Heart left ventricle (tissue), 16 donors: ENCODE measurements at regions of chr16 and their contacts with region 1.

Region 1: DNA sequence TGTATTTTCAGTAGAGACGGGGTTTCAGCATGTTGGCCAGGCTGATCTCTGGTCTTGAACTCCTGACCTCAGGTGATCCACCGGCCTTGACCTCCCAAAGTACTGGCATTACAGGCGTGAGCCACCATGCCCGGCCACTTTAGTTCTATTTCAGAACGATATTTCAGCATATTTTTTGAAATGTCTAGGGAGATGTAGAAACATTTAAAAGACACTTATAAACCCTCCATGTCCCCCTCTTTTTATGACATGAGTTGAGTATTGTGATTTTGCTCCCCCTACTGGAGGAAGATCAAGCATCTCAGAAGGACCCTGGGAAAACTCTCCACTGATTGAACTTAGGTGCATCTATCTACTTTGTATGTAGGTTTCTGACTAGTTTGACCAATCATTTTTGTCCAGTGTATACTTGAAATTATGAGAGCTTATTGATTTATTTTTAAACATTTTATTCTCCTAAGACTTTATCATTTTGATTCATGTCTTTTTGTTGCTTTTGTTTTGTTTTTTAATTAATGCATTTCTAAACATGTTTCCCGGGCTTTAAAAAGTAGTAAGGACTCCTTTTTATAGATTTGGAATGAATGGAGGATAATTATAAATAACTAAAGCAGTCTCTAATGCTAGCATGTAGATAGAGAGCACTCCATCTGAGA is 105.1 kb downstream of the CHD9 start:
- DNase-seq: no peak
- ATAC-seq: peak in 3 of 4 donors; percentile 68 to 78 (median 75)
- H3K4me3 ChIP-seq: no peak overlapping the region
- H3K27ac ChIP-seq: no peak overlapping the region
- H3K4me1 ChIP-seq: peaks cover 0 to 14% (median 5%) of the 10 kb centered on the region in 12 donors
- H3K27me3 ChIP-seq: no peaks in the 10 kb centered on the region
- CTCF ChIP-seq: peak; percentile 55 to 85 (median 70)
- POLR2A ChIP-seq: no peak

Region 2: DNA sequence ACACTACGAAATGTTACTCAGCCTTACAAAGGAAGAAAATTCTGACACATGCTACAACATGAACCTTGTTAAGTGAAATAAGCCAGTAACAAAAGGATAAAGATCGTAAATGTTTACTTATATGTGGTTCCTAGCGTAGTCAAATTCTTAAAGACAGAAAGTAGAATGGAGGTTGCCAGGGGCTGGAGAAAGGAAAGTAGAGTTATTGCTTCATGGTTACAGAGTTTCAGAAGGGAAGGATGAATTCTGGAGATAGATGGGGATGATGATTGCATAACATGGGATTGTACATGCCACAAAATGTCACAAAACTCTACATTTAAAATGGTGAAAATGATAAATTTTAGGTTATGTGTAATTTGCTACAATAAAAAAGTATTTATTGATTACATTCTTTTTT is 211.0 kb before region 1 on chr16:
- intact Hi-C with region 1: no loop called
- DNase-seq: no peak
- ATAC-seq: no peak
- H3K4me3 ChIP-seq: no peak overlapping the region
- H3K27ac ChIP-seq: no peak overlapping the region
- H3K4me1 ChIP-seq: no peaks in the 10 kb centered on the region
- H3K27me3 ChIP-seq: no peaks in the 10 kb centered on the region
- CTCF ChIP-seq: no peak
- POLR2A ChIP-seq: no peak

Region 3: GRCh38 chr16:52976539-52977167 is 183.3 kb before region 1 on chr16:
- intact Hi-C with region 1: loop called in 1 of 10 experiments (anchors 5 kb)
- DNase-seq: no peak
- ATAC-seq: peak in 1 of 4 donors; percentile 51
- H3K4me3 ChIP-seq: no peak overlapping the region
- H3K27ac ChIP-seq: no peak overlapping the region
- H3K4me1 ChIP-seq: no peaks in the 10 kb centered on the region
- H3K27me3 ChIP-seq: no peaks in the 10 kb centered on the region
- CTCF ChIP-seq: peak in 11 of 12 donors; percentile 7 to 53 (median 31)
- POLR2A ChIP-seq: no peak

Region 4: DNA sequence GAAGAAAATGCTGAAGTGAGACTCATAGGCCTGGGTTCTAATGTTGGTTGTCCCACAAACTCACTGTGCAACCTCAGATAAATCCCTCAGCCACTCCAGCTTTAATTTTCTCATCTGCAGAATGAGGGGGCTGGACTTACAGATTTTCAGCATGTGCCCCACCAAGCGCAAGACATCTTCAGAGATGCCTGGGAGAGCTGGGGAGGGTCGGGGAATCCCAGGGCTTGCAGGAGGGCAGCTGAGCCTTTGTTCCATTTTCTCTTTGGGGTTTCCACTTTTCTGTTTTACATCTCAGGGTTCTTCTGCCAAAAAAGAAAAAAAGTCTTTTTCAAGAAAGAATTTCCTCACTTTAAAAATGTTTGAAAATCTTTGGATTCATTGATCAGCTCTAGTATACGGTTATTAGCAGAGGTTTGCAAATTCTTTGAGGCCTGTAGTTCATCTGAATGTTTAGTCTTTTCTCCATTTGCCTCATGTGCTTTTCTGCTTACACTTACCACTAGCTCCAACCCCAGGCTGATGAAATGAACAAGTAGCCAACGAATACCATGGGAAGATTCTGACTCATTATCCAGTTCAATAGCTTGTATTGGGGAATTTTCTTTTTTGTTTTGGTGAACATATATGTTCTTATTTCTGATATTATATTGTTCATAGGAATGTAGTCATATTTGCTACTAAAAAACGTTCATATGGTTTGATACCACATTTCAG is 48.7 kb before region 1 on chr16:
- intact Hi-C with region 1: no loop called
- DNase-seq: no peak
- ATAC-seq: no peak
- H3K4me3 ChIP-seq: no peak overlapping the region
- H3K27ac ChIP-seq: no peak overlapping the region
- H3K4me1 ChIP-seq: peaks cover 0 to 16% (median 7%) of the 10 kb centered on the region in 12 donors
- H3K27me3 ChIP-seq: no peaks in the 10 kb centered on the region
- CTCF ChIP-seq: no peak
- POLR2A ChIP-seq: no peak

Region 5: GRCh38 chr16:53202398-53202797 is 42.5 kb after region 1 on chr16:
- intact Hi-C with region 1: loop called in 2 of 10 experiments (anchors 5 kb)
- DNase-seq: no peak
- ATAC-seq: no peak
- H3K4me3 ChIP-seq: no peak overlapping the region
- H3K27ac ChIP-seq: no peak overlapping the region
- H3K4me1 ChIP-seq: peaks cover 0 to 18% (median 9%) of the 10 kb centered on the region in 12 donors
- H3K27me3 ChIP-seq: no peaks in the 10 kb centered on the region
- CTCF ChIP-seq: no peak
- POLR2A ChIP-seq: no peak

Region 6: GRCh38 chr16:53207810-53208752 is 48.2 kb after region 1 on chr16:
- intact Hi-C with region 1: loop called in 2 of 10 experiments (anchors 5 kb)
- DNase-seq: peak in 4 of 5 donors; percentile 41 to 52 (median 43)
- ATAC-seq: peak; percentile 90 to 96 (median 93)
- H3K4me3 ChIP-seq: peak overlapping the region; percentile 11 to 65 (median 56)
- H3K27ac ChIP-seq: peak overlapping the region; percentile 66 to 92 (median 82)
- H3K4me1 ChIP-seq: peaks cover 3 to 58% (median 33%) of the 10 kb centered on the region in 12 donors
- H3K27me3 ChIP-seq: no peaks in the 10 kb centered on the region
- CTCF ChIP-seq: peak; percentile 33 to 75 (median 54)
- POLR2A ChIP-seq: no peak